IMR-90 (cell line): ENCODE measurements at regions of chr17 and their contacts with region 1.

Region 1: DNA sequence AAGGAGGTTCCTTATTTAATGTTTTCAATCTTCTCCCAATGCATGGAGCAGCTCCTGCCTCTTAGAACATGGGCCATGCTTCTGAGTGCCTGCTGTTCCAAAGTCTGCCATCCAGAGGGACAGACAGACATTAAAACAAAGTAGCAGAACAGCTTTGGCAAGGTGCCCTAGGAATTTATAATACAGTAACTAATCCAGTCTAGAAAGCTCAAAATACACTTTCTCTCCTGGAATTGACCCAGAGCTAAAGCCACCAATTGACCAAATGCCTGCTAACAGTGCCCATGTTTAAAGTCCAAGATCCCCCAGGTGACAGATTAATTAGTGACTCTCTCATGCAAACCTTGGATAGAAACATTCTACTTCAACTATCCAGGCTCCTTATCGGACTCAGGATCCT is 11.1 kb upstream of the CHRNE start:
- DNase-seq: peak; percentile 19
- ATAC-seq: no peak
- H3K4me3 ChIP-seq: no peak overlapping the region
- H3K27ac ChIP-seq: no peak overlapping the region
- H3K4me1 ChIP-seq: no peaks in the 10 kb centered on the region
- H3K27me3 ChIP-seq: no peaks in the 10 kb centered on the region
- CTCF ChIP-seq: no peak
- POLR2A ChIP-seq: no peak
- RAD21 ChIP-seq: no peak

Region 2: GRCh38 chr17:4625181-4625617 is 288.8 kb before region 1 on chr17:
- CTCF ChIA-PET with region 1: no interaction called
- POLR2A ChIA-PET with region 1: no interaction called
- dilution Hi-C with region 1: no loop called
- in situ Hi-C with region 1: no loop called
- intact Hi-C with region 1: no loop called
- DNase-seq: peak; percentile 13
- ATAC-seq: no peak
- H3K4me3 ChIP-seq: no peak overlapping the region
- H3K27ac ChIP-seq: no peak overlapping the region
- H3K4me1 ChIP-seq: no peaks in the 10 kb centered on the region; the same call in 1 of the 2 replicates
- H3K27me3 ChIP-seq: peaks cover 15% of the 10 kb centered on the region
- CTCF ChIP-seq: no peak
- POLR2A ChIP-seq: no peak
- RAD21 ChIP-seq: no peak

Region 3: GRCh38 chr17:4934173-4934979 is 20.4 kb after region 1 on chr17:
- CTCF ChIA-PET with region 1: interaction called, 4 read pairs
- POLR2A ChIA-PET with region 1: interaction called, 14 read pairs
- dilution Hi-C with region 1: no loop called
- in situ Hi-C with region 1: no loop called
- intact Hi-C with region 1: no loop called
- DNase-seq: peak; percentile 38
- ATAC-seq: peak; percentile 80
- H3K4me3 ChIP-seq: no peak overlapping the region
- H3K27ac ChIP-seq: no peak overlapping the region
- H3K4me1 ChIP-seq: peaks cover 11% of the 10 kb centered on the region
- H3K27me3 ChIP-seq: no peaks in the 10 kb centered on the region
- CTCF ChIP-seq: peak; percentile 34; the same call in 1 of the 2 replicates
- POLR2A ChIP-seq: no peak
- RAD21 ChIP-seq: no peak

Region 4: DNA sequence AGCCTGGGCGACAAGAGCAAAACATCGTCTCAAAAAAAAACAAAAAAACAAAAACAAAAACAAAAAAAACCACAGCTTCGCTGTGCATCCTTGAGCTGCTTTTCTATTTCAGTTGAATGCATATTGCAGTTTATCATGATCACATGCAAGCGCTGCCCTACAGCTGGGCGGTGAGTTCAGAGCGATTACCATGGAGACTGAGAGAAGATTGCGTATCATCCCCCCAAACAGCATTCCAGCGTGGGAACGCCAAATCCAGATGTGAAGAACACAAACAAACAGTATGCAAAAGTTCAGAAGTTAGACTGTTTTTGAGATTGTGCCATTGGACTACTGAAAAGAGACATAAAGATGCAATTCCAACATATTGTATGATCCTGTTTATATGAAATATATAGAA is 136.3 kb after region 1 on chr17:
- CTCF ChIA-PET with region 1: no interaction called
- POLR2A ChIA-PET with region 1: no interaction called
- dilution Hi-C with region 1: no loop called
- in situ Hi-C with region 1: loop called (anchors 10 kb)
- intact Hi-C with region 1: no loop called
- DNase-seq: peak; percentile 20
- ATAC-seq: no peak
- H3K4me3 ChIP-seq: no peak overlapping the region
- H3K27ac ChIP-seq: no peak overlapping the region
- H3K4me1 ChIP-seq: no peaks in the 10 kb centered on the region
- H3K27me3 ChIP-seq: peaks cover 2% of the 10 kb centered on the region; the same call in 1 of the 2 replicates
- CTCF ChIP-seq: no peak
- POLR2A ChIP-seq: no peak
- RAD21 ChIP-seq: no peak